ENCODE measurements at regions of chr20 and their contacts with region 1.

Region 1: DNA sequence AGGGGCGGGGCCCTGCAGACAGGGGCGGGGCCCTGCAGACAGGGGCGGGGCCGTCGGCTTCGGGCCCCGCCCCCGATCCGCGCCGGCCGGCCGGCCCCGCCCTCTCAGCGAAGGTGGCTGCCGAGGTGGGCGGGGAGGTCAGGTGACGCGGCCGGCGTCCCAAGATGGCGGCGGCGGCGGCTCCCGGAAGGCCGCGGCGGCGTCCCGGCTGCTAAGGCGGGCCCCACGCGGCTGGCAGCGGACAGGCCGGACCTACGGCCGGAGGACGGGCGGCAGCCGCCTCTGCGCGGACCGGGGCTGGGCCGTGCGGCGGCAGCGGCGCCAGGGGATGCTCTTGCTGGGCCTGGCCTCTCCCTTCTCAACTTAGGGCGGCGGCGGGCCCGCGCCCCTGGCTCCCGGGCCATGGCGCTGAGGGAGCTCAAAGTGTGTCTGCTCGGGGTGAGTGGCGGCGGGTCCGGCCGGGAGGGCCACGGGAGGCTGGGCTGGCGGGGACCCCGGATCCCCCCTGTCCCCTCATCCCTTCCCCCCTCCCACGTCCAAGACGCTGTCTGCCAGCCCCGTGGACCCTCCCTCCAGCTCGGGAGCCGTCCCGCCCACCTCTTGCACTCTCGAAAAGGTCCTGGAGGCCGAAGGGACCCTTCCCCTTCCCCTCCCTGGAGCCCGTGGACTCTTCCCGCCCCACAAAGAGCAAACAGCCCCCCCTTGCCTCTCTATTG is at the start of gene RAB22A:
- DNase-seq: peak; percentile 85 to 93
- ATAC-seq: peak; percentile 68 to 89 (median 73)
- H3K4me3 ChIP-seq: peak within 1 kb of the TSS; percentile 77
- H3K4me3 Mint-ChIP-seq: peak within 1 kb of the TSS; percentile 83
- H3K27ac ChIP-seq: peak within 1 kb of the TSS; percentile 87
- H3K27ac Mint-ChIP-seq: peak within 1 kb of the TSS; percentile 93 to 94
- H3K4me1 ChIP-seq: peaks cover 53% of the 10 kb centered on the region
- H3K4me1 Mint-ChIP-seq: peaks cover 45 to 48% of the 10 kb centered on the region in 2 donors
- H3K27me3 ChIP-seq: no peaks in the 10 kb centered on the region
- H3K27me3 Mint-ChIP-seq: no peaks in the 10 kb centered on the region
- CTCF ChIP-seq: no peak
- total RNA-seq, gene RAB22A: 19.6 to 29.8 (median 28.6) TPM

Region 2: DNA sequence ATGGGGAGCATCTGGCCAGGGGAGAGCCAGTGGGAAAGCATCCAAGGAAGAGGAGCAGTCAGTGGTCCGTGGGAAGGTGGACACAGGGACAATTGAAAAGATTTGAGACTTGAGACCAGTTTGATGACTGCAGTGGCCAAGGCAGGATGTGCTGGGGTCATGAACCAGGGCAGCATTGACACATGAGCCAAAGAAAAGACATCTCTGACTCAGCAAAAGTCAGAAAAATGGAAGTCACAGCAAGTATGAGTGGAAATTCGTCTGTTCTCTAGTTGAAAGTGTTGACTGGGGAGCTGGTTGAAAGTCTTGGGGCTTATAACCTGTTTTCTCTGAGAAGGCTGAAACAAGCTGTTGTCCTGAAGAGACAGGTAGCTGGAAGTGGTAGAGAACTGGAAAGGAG is 31.1 kb after region 1 on chr20:
- intact Hi-C with region 1: no loop called
- DNase-seq: no peak
- ATAC-seq: no peak
- H3K4me3 ChIP-seq: no peak overlapping the region
- H3K4me3 Mint-ChIP-seq: no peak overlapping the region
- H3K27ac ChIP-seq: no peak overlapping the region
- H3K27ac Mint-ChIP-seq: peak overlapping the region; percentile 7 to 64
- H3K4me1 ChIP-seq: peaks cover 5% of the 10 kb centered on the region
- H3K4me1 Mint-ChIP-seq: peaks cover 52 to 65% of the 10 kb centered on the region in 2 donors
- H3K27me3 ChIP-seq: no peaks in the 10 kb centered on the region
- H3K27me3 Mint-ChIP-seq: no peaks in the 10 kb centered on the region
- CTCF ChIP-seq: no peak

Region 3: DNA sequence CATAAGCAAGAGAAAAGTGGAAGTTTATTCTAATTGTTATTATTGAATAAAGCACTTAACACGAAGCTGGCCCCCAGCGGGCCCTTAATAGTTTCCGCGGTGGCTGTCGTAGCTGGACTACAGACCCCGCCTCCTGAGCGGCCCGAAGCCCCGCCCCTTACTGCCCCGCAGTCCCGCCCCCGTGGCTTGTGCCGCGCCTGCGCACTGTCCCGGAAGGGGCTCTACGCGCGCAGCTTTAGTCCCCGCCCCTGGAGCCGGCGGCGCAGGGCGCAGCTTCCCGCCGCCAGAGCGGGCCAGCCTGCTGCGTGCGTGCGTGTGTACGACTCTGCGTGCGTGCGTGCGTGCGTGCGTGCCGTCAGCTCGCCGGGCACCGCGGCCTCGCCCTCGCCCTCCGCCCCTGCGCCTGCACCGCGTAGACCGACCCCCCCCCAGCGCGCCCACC is 79.2 kb after region 1 on chr20 and contains the start of gene VAPB:
- intact Hi-C with region 1: loop called (anchors 5 kb)
- DNase-seq: peak; percentile 98 to 99
- ATAC-seq: peak; percentile 93 to 98 (median 95)
- H3K4me3 ChIP-seq: peak within 1 kb of the TSS; percentile 82
- H3K4me3 Mint-ChIP-seq: peak within 1 kb of the TSS; percentile 84
- H3K27ac ChIP-seq: peak within 1 kb of the TSS; percentile 99
- H3K27ac Mint-ChIP-seq: peak within 1 kb of the TSS; percentile 90 to 96
- H3K4me1 ChIP-seq: peaks cover 15% of the 10 kb centered on the region
- H3K4me1 Mint-ChIP-seq: peaks cover 43 to 44% of the 10 kb centered on the region in 2 donors
- H3K27me3 ChIP-seq: no peaks in the 10 kb centered on the region
- H3K27me3 Mint-ChIP-seq: peaks cover 19 to 30% of the 10 kb centered on the region in 2 donors
- CTCF ChIP-seq: no peak
- total RNA-seq, gene VAPB: 20.3 to 23.1 (median 21.3) TPM

Region 4: GRCh38 chr20:58980700-58981627 is 671.2 kb after region 1 on chr20 and contains the start of gene NELFCD:
- intact Hi-C with region 1: loop called (anchors 5 kb)
- DNase-seq: peak; percentile 87 to 95
- ATAC-seq: peak; percentile 86 to 94 (median 87)
- H3K4me3 ChIP-seq: peak within 1 kb of the TSS; percentile 89
- H3K4me3 Mint-ChIP-seq: peak within 1 kb of the TSS; percentile 77
- H3K27ac ChIP-seq: peak within 1 kb of the TSS; percentile 66
- H3K27ac Mint-ChIP-seq: peak within 1 kb of the TSS; percentile 70 to 87
- H3K4me1 ChIP-seq: peaks cover 33% of the 10 kb centered on the region
- H3K4me1 Mint-ChIP-seq: peaks cover 21 to 29% of the 10 kb centered on the region in 2 donors
- H3K27me3 ChIP-seq: no peaks in the 10 kb centered on the region
- H3K27me3 Mint-ChIP-seq: no peaks in the 10 kb centered on the region
- CTCF ChIP-seq: no peak
- total RNA-seq, gene NELFCD: 75.7 to 105 (median 92.6) TPM

Measured in natural killer cell (primary cell).